Naive thymus-derived CD4-positive, alpha-beta T cell (primary cell): ENCODE measurements at regions of chr2 and their contacts with region 1.

Region 1: DNA sequence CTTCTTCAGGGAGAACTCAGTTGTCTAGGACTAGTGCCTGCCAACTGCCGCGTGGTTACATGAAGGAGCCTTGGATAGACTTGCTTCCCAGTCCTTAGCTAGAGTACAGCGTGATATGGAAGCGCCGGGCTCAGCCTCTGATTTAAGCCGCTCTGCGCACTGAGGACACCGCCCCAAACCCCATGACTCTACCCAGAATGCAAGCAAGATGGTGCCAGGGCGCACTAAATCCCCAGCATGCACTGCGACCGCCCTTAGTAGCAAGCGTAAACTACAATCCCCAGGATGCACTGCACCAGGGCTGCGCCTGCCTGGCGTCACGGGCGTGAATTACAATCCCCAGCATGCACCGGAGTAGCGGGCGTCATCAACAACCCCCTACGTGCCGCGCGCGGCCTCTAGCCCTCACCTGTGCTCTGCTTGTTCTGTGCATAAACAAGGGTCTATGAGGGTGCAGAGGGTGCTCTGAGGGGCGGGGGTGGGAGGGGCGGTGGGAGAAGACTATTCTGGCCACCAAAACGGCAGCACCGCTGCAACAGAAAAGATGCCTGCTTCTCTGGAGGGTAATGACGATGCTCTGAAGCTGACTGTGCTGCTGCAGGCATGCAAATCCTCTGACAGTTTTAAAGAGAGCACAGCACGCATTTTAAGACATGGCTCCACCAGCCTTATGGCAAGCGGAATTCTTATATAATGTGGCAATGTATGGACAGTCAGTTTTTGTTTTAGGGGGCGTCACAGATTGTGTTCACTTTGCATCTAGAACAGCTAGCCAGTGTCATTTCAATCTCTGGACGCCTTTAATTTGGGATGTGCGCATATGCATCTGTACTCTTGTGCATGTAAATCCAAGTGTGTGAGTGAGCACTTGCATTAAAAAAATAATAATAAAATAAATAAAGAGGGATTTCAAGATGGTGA is 282.5 kb upstream of the MYT1L start:
- DNase-seq: peak; percentile 69 to 95 (median 91)
- ATAC-seq: peak; percentile 100
- H3K4me3 ChIP-seq: peak overlapping the region; percentile 59
- H3K4me3 Mint-ChIP-seq: peak overlapping the region; percentile 71 to 91 (median 85)
- H3K27ac ChIP-seq: peak overlapping the region; percentile 85
- H3K27ac Mint-ChIP-seq: peak overlapping the region; percentile 69 to 95 (median 93)
- H3K4me1 ChIP-seq: no peaks in the 10 kb centered on the region
- H3K4me1 Mint-ChIP-seq: peaks cover 4 to 16% (median 10%) of the 10 kb centered on the region in 7 donors
- H3K27me3 ChIP-seq: no peaks in the 10 kb centered on the region
- H3K27me3 Mint-ChIP-seq: peaks cover 10 to 19% (median 13%) of the 10 kb centered on the region in 5 donors

Region 2: GRCh38 chr2:677056-677965 is 1936.2 kb before region 1 on chr2 and contains the start of gene TMEM18:
- CTCF ChIA-PET with region 1: no interaction called
- POLR2A ChIA-PET with region 1: no interaction called
- intact Hi-C with region 1: loop called in 1 of 2 experiments (anchors 2 kb)
- DNase-seq: peak in 8 of 9 donors; percentile 97 to 100 (median 99)
- ATAC-seq: peak; percentile 93
- H3K4me3 ChIP-seq: peak within 1 kb of the TSS; percentile 95
- H3K4me3 Mint-ChIP-seq: peak within 1 kb of the TSS; percentile 93 to 100 (median 98)
- H3K27ac ChIP-seq: peak within 1 kb of the TSS; percentile 100
- H3K27ac Mint-ChIP-seq: peak within 1 kb of the TSS; percentile 95 to 100 (median 99)
- H3K4me1 ChIP-seq: peaks cover 0 to 4% of the 10 kb centered on the region in 2 donors
- H3K4me1 Mint-ChIP-seq: peaks cover 23 to 49% (median 40%) of the 10 kb centered on the region in 7 donors
- H3K27me3 ChIP-seq: no peaks in the 10 kb centered on the region
- H3K27me3 Mint-ChIP-seq: no peaks in the 10 kb centered on the region
- total RNA-seq, gene TMEM18: 23.3 to 39.8 (median 33.2) TPM

Region 3: GRCh38 chr2:2646433-2647051 is 33.0 kb after region 1 on chr2:
- CTCF ChIA-PET with region 1: no interaction called
- POLR2A ChIA-PET with region 1: interaction called, 33 read pairs
- intact Hi-C with region 1: loop called (anchors 1 kb)
- DNase-seq: peak in 8 of 9 donors; percentile 42 to 86 (median 80)
- ATAC-seq: peak; percentile 94
- H3K4me3 ChIP-seq: peak overlapping the region; percentile 32
- H3K4me3 Mint-ChIP-seq: peak overlapping the region; percentile 60 to 88 (median 82)
- H3K27ac ChIP-seq: peak overlapping the region; percentile 73
- H3K27ac Mint-ChIP-seq: peak overlapping the region; percentile 60 to 99 (median 96)
- H3K4me1 ChIP-seq: peaks cover 0 to 16% of the 10 kb centered on the region in 2 donors
- H3K4me1 Mint-ChIP-seq: peaks cover 20 to 72% (median 49%) of the 10 kb centered on the region in 7 donors
- H3K27me3 ChIP-seq: no peaks in the 10 kb centered on the region
- H3K27me3 Mint-ChIP-seq: no peaks in the 10 kb centered on the region

Region 4: DNA sequence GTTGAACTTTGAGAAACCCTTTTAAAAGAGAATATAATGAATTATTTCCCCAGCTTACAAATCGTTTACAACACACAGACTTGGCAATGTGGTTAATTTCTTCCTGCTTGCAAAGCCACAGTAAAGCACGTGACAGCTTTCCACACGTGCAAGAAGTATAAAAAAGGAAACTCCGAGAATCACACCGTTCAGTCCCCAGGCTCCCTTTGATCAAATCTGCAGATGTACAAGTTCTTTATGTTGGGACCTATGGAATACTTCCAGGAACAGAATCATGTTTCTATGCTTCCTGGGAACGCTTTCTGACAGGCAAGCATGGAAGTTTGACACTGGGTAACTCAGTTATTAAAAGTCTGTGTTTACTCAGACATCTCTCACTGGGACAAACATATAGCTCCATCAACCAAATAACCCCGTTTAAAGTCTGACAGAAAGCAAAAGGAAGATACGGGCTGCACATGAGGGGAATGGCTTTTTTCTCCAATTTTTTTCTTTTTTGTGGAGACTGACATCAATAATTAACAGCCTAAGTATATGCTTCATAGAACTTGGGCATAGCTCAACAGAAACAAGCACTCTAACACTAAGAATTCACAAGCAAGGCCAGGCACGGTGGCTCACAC is 629.3 kb after region 1 on chr2:
- CTCF ChIA-PET with region 1: no interaction called
- POLR2A ChIA-PET with region 1: no interaction called
- intact Hi-C with region 1: loop called in 1 of 2 experiments (anchors 2 kb)
- DNase-seq: peak in 7 of 9 donors; percentile 62 to 79 (median 74)
- ATAC-seq: peak; percentile 90
- H3K4me3 ChIP-seq: peak overlapping the region; percentile 12
- H3K4me3 Mint-ChIP-seq: peak overlapping the region in 9 of 10 donors; percentile 29 to 86 (median 70)
- H3K27ac ChIP-seq: peak overlapping the region; percentile 69
- H3K27ac Mint-ChIP-seq: peak overlapping the region in 6 of 9 donors; percentile 72 to 93 (median 86)
- H3K4me1 ChIP-seq: peaks cover 33 to 59% of the 10 kb centered on the region in 2 donors
- H3K4me1 Mint-ChIP-seq: peaks cover 17 to 36% (median 23%) of the 10 kb centered on the region in 7 donors
- H3K27me3 ChIP-seq: no peaks in the 10 kb centered on the region
- H3K27me3 Mint-ChIP-seq: no peaks in the 10 kb centered on the region

Region 5: DNA sequence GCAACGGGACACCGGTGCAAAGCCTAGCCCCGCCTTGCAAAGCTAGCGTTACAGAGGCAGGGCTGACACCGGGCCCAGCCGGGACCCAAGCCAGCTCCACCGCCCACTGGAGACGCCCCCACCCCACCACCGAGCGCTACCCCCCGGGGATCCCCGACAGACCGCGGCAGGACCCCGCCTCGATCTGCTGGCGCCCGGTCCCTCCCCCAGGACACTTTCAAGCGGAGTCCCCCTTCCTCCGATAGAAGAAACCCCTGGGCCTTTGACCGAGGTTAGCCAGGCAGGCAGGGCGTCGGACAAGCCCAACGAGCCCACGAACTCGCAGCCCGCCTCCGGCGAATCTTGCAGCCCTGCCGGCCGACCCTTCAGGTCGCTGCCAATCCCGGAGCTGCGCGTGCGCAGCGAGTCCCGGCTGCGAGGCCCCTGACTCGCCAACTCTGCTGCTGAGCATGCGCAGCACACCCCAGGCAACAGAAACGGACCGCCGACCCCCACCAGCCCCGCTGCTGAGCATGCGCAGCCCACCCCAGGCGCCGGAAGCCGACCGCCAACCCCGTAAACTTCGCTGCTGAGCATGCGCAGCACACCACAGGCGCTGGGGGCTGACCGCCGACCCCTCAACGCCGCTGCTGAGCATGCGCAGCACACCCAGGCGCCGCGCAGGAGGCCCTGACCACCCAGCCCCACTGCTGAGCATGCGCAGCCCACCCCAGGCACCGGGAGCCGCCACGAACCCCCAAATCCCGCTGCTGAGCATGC is 905.1 kb after region 1 on chr2:
- CTCF ChIA-PET with region 1: no interaction called
- POLR2A ChIA-PET with region 1: no interaction called
- intact Hi-C with region 1: loop called (anchors 1 to 2 kb)
- DNase-seq: peak; percentile 96 to 99 (median 98)
- ATAC-seq: peak; percentile 83
- H3K4me3 ChIP-seq: peak overlapping the region; percentile 89
- H3K4me3 Mint-ChIP-seq: peak overlapping the region; percentile 83 to 96 (median 92)
- H3K27ac ChIP-seq: peak overlapping the region; percentile 96
- H3K27ac Mint-ChIP-seq: peak overlapping the region; percentile 84 to 96 (median 93)
- H3K4me1 ChIP-seq: peaks cover 18% of the 10 kb centered on the region in 2 donors
- H3K4me1 Mint-ChIP-seq: peaks cover 27 to 59% (median 47%) of the 10 kb centered on the region in 7 donors
- H3K27me3 ChIP-seq: no peaks in the 10 kb centered on the region
- H3K27me3 Mint-ChIP-seq: peaks cover 0 to 2% (median 0%) of the 10 kb centered on the region in 5 donors

Region 6: GRCh38 chr2:3575534-3576262 is 962.2 kb after region 1 on chr2:
- CTCF ChIA-PET with region 1: no interaction called
- POLR2A ChIA-PET with region 1: no interaction called
- intact Hi-C with region 1: loop called in 1 of 2 experiments (anchors 5 kb)
- DNase-seq: peak in 7 of 9 donors; percentile 24 to 52 (median 33)
- ATAC-seq: peak; percentile 41
- H3K4me3 ChIP-seq: peak overlapping the region; percentile 76
- H3K4me3 Mint-ChIP-seq: peak overlapping the region; percentile 77 to 96 (median 90)
- H3K27ac ChIP-seq: peak overlapping the region; percentile 87
- H3K27ac Mint-ChIP-seq: peak overlapping the region; percentile 84 to 97 (median 92)
- H3K4me1 ChIP-seq: peaks cover 14 to 25% of the 10 kb centered on the region in 2 donors
- H3K4me1 Mint-ChIP-seq: peaks cover 25 to 52% (median 42%) of the 10 kb centered on the region in 7 donors
- H3K27me3 ChIP-seq: no peaks in the 10 kb centered on the region
- H3K27me3 Mint-ChIP-seq: no peaks in the 10 kb centered on the region